ENCODE measurements at regions of chr7 and their contacts with region 1.

Region 1: GRCh38 chr7:2104107-2104710 is 128.5 kb downstream of the MAD1L1 start:
- DNase-seq: peak; percentile 67
- ATAC-seq: peak; percentile 47
- H3K4me3 Mint-ChIP-seq: peak overlapping the region; percentile 61
- H3K27ac Mint-ChIP-seq: peak overlapping the region; percentile 71
- H3K4me1 Mint-ChIP-seq: peaks cover 41% of the 10 kb centered on the region
- H3K27me3 Mint-ChIP-seq: no peaks in the 10 kb centered on the region
- CTCF ChIP-seq: no peak

Region 2: DNA sequence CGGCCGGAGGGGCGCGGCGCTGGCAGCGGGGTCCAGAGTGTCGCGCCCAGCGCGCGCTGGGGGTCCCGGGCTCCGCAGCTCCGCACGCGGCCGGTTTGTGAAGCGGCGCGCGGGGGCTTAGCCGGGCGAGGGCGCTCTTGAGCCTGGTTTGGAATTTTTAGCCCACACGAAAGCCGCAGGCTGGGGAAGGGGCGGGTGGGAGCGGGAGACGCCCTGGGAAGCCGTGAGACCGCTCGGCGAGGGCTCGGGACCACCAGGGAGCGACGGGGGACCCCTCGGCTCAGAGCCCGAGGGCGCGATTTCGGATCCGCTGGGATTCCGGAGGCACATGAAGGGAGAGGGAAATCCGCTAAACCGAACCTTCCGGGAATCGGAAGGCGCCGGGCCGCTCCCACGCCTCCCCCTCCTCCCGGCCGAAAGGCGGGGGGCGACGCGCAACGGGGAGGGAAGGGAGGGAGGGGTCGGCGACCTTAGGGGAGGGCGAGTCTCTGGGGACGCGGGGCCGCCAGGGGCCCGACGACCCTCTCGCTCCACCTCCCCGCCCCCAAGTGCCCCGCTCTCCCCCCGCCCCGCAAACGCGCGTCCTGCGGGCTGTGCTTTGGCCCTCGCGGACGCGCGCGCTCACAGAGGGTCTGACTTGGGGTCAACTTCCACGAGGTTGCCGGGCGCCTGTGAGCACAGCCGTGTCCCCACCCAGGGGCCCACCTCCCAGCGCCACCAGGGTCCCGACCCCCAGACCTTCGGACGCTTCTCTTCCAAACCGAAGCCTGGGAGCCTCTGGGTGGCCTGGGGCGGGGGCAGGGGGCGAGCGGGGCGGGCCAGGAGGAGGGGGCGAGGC is 439.3 kb before region 1 on chr7:
- CTCF ChIA-PET with region 1: no interaction called
- POLR2A ChIA-PET with region 1: no interaction called
- intact Hi-C with region 1: loop called (anchors 5 kb)
- DNase-seq: peak; percentile 47
- ATAC-seq: no peak
- H3K4me3 Mint-ChIP-seq: peak overlapping the region; percentile 38
- H3K27ac Mint-ChIP-seq: no peak overlapping the region
- H3K4me1 Mint-ChIP-seq: peaks cover 12% of the 10 kb centered on the region
- H3K27me3 Mint-ChIP-seq: peaks cover 37% of the 10 kb centered on the region
- CTCF ChIP-seq: no peak

Region 3: GRCh38 chr7:2019607-2020511 is 84.3 kb before region 1 on chr7:
- CTCF ChIA-PET with region 1: no interaction called
- POLR2A ChIA-PET with region 1: no interaction called
- intact Hi-C with region 1: loop called (anchors 2 kb)
- DNase-seq: peak; percentile 71
- ATAC-seq: peak; percentile 86
- H3K4me3 Mint-ChIP-seq: peak overlapping the region; percentile 77
- H3K27ac Mint-ChIP-seq: peak overlapping the region; percentile 90
- H3K4me1 Mint-ChIP-seq: peaks cover 54% of the 10 kb centered on the region
- H3K27me3 Mint-ChIP-seq: no peaks in the 10 kb centered on the region
- CTCF ChIP-seq: no peak

Region 4: DNA sequence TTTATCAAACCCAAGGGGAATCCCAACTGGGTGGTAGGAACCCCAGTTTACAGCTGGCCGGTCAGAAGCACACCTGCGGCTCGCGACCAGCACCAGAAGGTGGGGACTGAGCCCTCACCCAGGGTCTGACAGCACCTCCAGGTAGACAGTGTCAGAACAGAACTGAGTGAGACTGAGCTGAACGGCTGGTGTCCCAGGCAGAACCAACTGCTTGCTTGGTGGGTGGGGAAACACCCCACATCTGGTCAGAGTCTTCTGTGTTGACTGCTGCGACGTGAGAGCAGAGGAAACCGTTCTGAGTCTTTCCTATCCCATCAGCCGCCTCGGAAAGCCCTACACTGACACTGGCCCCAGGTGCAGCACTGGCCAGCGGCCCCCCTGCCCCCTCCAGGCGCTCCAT is 32.2 kb before region 1 on chr7:
- CTCF ChIA-PET with region 1: no interaction called
- POLR2A ChIA-PET with region 1: interaction called, 6 read pairs
- intact Hi-C with region 1: loop called (anchors 2 kb)
- DNase-seq: peak; percentile 33
- ATAC-seq: peak; percentile 94
- H3K4me3 Mint-ChIP-seq: peak overlapping the region; percentile 59
- H3K27ac Mint-ChIP-seq: peak overlapping the region; percentile 79
- H3K4me1 Mint-ChIP-seq: peaks cover 54% of the 10 kb centered on the region
- H3K27me3 Mint-ChIP-seq: no peaks in the 10 kb centered on the region
- CTCF ChIP-seq: no peak

Region 5: GRCh38 chr7:2157468-2158279 is 53.5 kb after region 1 on chr7:
- CTCF ChIA-PET with region 1: no interaction called
- POLR2A ChIA-PET with region 1: no interaction called
- intact Hi-C with region 1: loop called (anchors 5 kb)
- DNase-seq: no peak
- ATAC-seq: no peak
- H3K4me3 Mint-ChIP-seq: no peak overlapping the region
- H3K27ac Mint-ChIP-seq: peak overlapping the region; percentile 30
- H3K4me1 Mint-ChIP-seq: peaks cover 5% of the 10 kb centered on the region
- H3K27me3 Mint-ChIP-seq: no peaks in the 10 kb centered on the region
- CTCF ChIP-seq: no peak

Region 6: DNA sequence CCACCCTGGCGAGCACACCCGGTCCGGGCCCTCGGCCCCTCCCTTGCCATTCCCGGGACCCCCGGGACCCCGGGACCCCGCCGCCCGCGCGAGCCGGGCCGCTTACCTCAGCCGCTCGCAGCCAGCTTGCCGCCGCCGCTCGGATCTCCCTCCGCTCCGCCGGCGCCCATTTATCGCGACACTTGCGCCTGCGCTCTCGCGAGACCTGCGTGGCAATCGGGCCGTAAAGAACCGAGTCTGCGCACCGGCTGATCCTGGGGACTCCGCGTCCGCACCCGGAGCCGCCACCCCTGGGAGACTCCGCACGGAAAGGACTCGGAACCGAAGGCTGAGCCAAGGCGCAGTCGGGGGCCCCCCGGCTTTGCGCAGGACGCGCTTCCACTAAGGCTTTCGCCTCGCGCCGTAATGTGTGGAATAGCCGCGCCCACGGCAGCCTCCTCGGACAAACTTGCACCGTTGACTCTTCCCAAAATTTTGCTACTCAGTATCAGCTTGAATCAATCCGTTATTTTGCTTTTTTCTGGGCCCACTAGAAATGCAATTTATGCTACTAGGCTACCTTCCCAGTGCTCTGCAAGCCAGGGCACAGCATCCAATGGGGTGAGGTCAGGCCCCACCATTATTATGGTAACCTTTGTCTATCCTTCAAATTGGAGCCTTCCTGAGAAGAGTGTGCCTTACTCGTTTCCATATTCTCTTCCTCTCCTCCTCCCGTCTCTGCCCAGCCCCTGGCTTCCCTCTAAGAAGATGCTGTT is 128.7 kb after region 1 on chr7 and contains the start of gene MAD1L1:
- CTCF ChIA-PET with region 1: no interaction called
- POLR2A ChIA-PET with region 1: interaction called, 5 read pairs
- intact Hi-C with region 1: loop called (anchors 2 kb)
- DNase-seq: peak; percentile 88
- ATAC-seq: peak; percentile 68
- H3K4me3 Mint-ChIP-seq: peak within 1 kb of the TSS; percentile 90
- H3K27ac Mint-ChIP-seq: peak within 1 kb of the TSS; percentile 81
- H3K4me1 Mint-ChIP-seq: peaks cover 61% of the 10 kb centered on the region
- H3K27me3 Mint-ChIP-seq: no peaks in the 10 kb centered on the region
- CTCF ChIP-seq: no peak
- total RNA-seq, gene MAD1L1: 54.6 and 65.7 TPM in 2 replicates

Region 7: DNA sequence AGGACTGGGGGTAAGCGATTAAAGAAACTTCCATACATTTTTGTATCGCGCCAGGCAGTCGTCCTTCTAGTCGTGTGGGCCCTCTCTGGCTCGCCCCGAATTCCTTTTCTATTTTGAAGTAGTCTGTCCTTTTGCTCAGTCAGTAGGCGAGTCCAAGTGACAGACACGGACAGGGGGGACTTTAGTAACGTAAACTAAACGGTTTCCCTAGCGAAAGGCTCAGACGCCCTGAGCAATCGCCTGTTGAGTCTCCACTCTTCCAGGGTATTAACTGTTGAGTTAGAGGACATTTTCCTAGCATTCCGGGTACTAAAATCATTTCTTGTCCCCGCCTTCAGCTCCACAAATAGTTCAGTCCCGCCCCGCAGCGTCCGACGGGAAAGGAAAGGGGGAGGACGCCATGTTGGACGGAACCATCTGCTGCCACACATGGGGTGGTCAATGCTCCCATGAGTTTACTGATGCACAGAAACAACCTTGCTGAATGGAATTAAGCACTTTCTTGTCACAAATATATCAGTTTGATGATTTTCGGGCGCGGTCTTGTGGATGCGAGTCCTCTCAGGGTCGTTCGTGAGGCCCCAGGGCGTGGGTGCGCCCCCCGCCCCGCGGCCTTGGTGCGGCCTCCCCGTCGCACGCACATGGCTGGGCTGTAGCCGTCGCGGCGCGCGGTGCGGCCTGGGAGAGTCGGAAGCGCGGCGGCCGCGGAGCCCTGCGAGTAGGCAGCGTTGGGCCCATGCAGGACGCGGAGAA is 250.2 kb after region 1 on chr7 and contains the start of gene EIF3B:
- CTCF ChIA-PET with region 1: interaction called, 23 read pairs
- POLR2A ChIA-PET with region 1: no interaction called
- intact Hi-C with region 1: loop called (anchors 1 kb)
- DNase-seq: peak; percentile 88
- ATAC-seq: peak; percentile 85
- H3K4me3 Mint-ChIP-seq: peak within 1 kb of the TSS; percentile 94
- H3K27ac Mint-ChIP-seq: peak within 1 kb of the TSS; percentile 100
- H3K4me1 Mint-ChIP-seq: peaks cover 33% of the 10 kb centered on the region
- H3K27me3 Mint-ChIP-seq: no peaks in the 10 kb centered on the region
- CTCF ChIP-seq: no peak
- total RNA-seq, gene EIF3B: 198 and 202 TPM in 2 replicates